K562 (cell line): ENCODE measurements at regions of chr3 and their contacts with region 1.

Region 1: DNA sequence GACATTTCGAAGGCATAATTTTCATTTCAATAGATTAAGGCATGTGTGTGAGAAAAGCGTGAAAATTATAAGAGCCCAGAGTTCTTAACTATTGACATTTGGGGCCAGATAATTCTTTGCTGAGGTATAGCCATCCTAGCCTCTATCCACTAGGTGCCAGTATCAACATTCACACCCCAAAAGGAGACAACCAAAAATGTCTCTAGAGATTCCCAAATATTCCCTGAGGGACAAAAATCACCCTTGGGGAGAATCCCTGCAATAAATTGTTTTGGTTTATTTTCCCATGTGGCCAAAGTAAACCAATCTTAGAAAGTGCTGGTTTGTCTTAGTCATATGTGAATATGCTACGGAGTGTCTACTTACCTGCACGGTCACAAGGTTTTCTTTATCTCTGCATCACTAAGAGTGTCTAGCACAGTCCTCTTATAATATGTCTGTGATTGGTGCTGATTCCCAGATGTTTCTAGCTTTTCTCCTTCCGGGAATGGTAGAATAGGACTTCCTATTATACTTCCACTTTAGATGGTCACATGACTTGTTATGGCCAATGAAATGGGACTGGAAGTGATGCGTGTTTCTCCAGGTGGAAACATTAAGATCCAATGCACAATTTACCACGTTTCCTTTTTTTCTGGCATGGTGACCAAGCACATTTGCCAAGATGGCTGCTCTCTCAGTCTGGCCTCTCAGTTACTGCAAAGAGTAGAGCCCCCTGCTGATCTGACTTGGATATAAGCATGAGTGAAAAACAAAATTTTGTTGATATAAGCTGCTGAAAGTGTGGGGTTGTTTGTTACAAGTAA is 8.0 kb upstream of the KBTBD8 start:
- DNase-seq: peak; percentile 20 to 40 (median 25)
- ATAC-seq: peak; percentile 85
- H3K4me3 ChIP-seq: no peak overlapping the region
- H3K27ac ChIP-seq: 0 out of 3 replicates have a peak overlapping the region, but pooled peaks have one; percentile 14
- H3K4me1 ChIP-seq: peaks cover 0 to 13% of the 10 kb centered on the region in 2 experiments; a peak in 2 of 5 replicates
- H3K27me3 ChIP-seq: no peaks in the 10 kb centered on the region
- CTCF ChIP-seq: peak in 2 of 3 experiments; percentile 44 to 68; a peak in 3 of 6 replicates
- EP300 ChIP-seq: no peak
- POLR2A ChIP-seq: no peak
- RAD21 ChIP-seq: peak; percentile 74 to 83

Region 2: GRCh38 chr3:66938338-66938963 is 51.6 kb before region 1 on chr3:
- CTCF ChIA-PET with region 1: no interaction called
- POLR2A ChIA-PET with region 1: no interaction called
- in situ Hi-C with region 1: no loop called
- intact Hi-C with region 1: no loop called
- DNase-seq: peak; percentile 18 to 64 (median 24)
- ATAC-seq: peak; percentile 89
- H3K4me3 ChIP-seq: no peak overlapping the region
- H3K27ac ChIP-seq: no peak overlapping the region
- H3K4me1 ChIP-seq: no peaks in the 10 kb centered on the region
- H3K27me3 ChIP-seq: peaks cover 0 to 6% of the 10 kb centered on the region in 2 experiments; a peak in 1 of 5 replicates
- CTCF ChIP-seq: peak; percentile 60 to 65 (median 64)
- EP300 ChIP-seq: no peak
- POLR2A ChIP-seq: no peak
- RAD21 ChIP-seq: peak; percentile 71 to 79

Region 3: GRCh38 chr3:67037615-67038014 is 47.6 kb after region 1 on chr3:
- CTCF ChIA-PET with region 1: interaction called, 6 read pairs
- POLR2A ChIA-PET with region 1: no interaction called
- in situ Hi-C with region 1: no loop called
- intact Hi-C with region 1: loop called (anchors 1 kb)
- DNase-seq: peak in 1 of 4 experiments; percentile 33
- ATAC-seq: peak; percentile 89
- H3K4me3 ChIP-seq: no peak overlapping the region
- H3K27ac ChIP-seq: no peak overlapping the region
- H3K4me1 ChIP-seq: peaks cover 0 to 8% of the 10 kb centered on the region in 2 experiments; a peak in 4 of 5 replicates
- H3K27me3 ChIP-seq: no peaks in the 10 kb centered on the region
- CTCF ChIP-seq: peak in 1 of 3 experiments; percentile 58; a peak in 2 of 6 replicates
- EP300 ChIP-seq: no peak
- POLR2A ChIP-seq: no peak
- RAD21 ChIP-seq: peak; percentile 80 to 85